ENCODE measurements at regions of chr6 and their contacts with region 1.

Region 1: GRCh38 chr6:26175428-26176181 is 88.4 kb downstream of the HFE start:
- DNase-seq: peak in 7 of 9 donors; percentile 57 to 75 (median 66)
- ATAC-seq: peak; percentile 32
- H3K4me3 ChIP-seq: no peak overlapping the region
- H3K4me3 Mint-ChIP-seq: peak overlapping the region in 7 of 10 donors; percentile 15 to 63 (median 43)
- H3K27ac ChIP-seq: no peak overlapping the region
- H3K27ac Mint-ChIP-seq: peak overlapping the region; percentile 32 to 89 (median 76)
- H3K4me1 ChIP-seq: peaks cover 16 to 19% of the 10 kb centered on the region in 2 donors
- H3K4me1 Mint-ChIP-seq: peaks cover 20 to 51% (median 39%) of the 10 kb centered on the region in 7 donors
- H3K27me3 ChIP-seq: no peaks in the 10 kb centered on the region
- H3K27me3 Mint-ChIP-seq: no peaks in the 10 kb centered on the region

Region 2: DNA sequence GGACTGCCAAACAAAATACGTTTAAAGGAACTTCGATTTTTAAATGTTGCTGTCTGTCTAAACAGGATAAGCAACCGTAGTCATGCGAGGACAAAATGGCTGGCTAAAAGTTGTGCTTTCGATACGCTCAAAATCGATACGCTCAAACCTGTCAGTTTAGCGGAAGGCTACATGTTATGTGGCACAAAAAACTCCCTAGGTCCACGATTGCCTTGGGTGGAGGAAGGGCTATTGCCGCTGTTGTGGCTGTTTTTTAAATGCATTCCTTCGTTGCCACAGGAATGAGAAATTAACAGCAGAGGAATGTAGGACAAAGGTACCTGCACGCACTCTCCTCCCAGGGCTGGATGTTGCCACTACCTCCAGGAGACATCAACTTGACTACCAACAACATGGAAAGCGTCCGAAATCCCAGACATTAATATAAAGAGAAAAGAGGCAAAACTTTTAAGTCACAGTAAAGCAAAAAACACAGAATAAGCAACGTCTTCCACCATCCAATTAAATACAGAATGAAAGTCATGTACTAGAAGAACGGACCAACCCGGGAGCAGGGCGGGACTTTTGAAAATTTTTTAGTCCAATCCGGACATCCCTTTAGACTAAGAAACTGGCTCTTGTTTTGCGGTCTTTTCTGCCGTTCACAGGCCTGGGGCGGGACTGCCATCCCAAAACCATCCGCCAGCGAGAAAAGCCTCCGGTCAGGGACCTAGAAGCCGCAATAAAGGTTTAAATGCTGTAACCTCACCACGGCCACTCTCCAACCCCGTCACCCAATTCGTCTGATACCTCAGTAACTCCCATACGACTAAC is 120.5 kb before region 1 on chr6:
- CTCF ChIA-PET with region 1: no interaction called
- POLR2A ChIA-PET with region 1: interaction called, 11 read pairs
- intact Hi-C with region 1: no loop called
- DNase-seq: peak; percentile 54 to 94 (median 90)
- ATAC-seq: peak; percentile 81
- H3K4me3 ChIP-seq: peak overlapping the region; percentile 93
- H3K4me3 Mint-ChIP-seq: peak overlapping the region; percentile 88 to 99 (median 95)
- H3K27ac ChIP-seq: peak overlapping the region; percentile 83
- H3K27ac Mint-ChIP-seq: peak overlapping the region; percentile 95 to 99 (median 98)
- H3K4me1 ChIP-seq: peaks cover 0 to 14% of the 10 kb centered on the region in 2 donors
- H3K4me1 Mint-ChIP-seq: peaks cover 9 to 52% (median 10%) of the 10 kb centered on the region in 7 donors
- H3K27me3 ChIP-seq: no peaks in the 10 kb centered on the region
- H3K27me3 Mint-ChIP-seq: peaks cover 0 to 10% (median 0%) of the 10 kb centered on the region in 5 donors

Region 3: GRCh38 chr6:26204332-26205165 is 28.9 kb after region 1 on chr6:
- CTCF ChIA-PET with region 1: interaction called, 5 read pairs
- POLR2A ChIA-PET with region 1: interaction called, 2,611 read pairs
- intact Hi-C with region 1: loop called in 1 of 2 experiments (anchors 1 kb)
- DNase-seq: peak; percentile 67 to 95 (median 89)
- ATAC-seq: peak; percentile 72
- H3K4me3 ChIP-seq: peak overlapping the region; percentile 77
- H3K4me3 Mint-ChIP-seq: no peak overlapping the region
- H3K27ac ChIP-seq: peak overlapping the region; percentile 90
- H3K27ac Mint-ChIP-seq: no peak overlapping the region
- H3K4me1 ChIP-seq: peaks cover 20 to 23% of the 10 kb centered on the region in 2 donors
- H3K4me1 Mint-ChIP-seq: peaks cover 9 to 36% (median 26%) of the 10 kb centered on the region in 7 donors
- H3K27me3 ChIP-seq: no peaks in the 10 kb centered on the region
- H3K27me3 Mint-ChIP-seq: peaks cover 0 to 5% (median 0%) of the 10 kb centered on the region in 5 donors

Region 4: GRCh38 chr6:26249957-26250697 is 74.5 kb after region 1 on chr6:
- CTCF ChIA-PET with region 1: no interaction called
- POLR2A ChIA-PET with region 1: interaction called, 6 read pairs
- intact Hi-C with region 1: loop called in 1 of 2 experiments (anchors 1 kb)
- DNase-seq: peak; percentile 53 to 85 (median 80)
- ATAC-seq: peak; percentile 85
- H3K4me3 ChIP-seq: peak overlapping the region; percentile 84
- H3K4me3 Mint-ChIP-seq: peak overlapping the region; percentile 88 to 100 (median 96)
- H3K27ac ChIP-seq: peak overlapping the region; percentile 71
- H3K27ac Mint-ChIP-seq: peak overlapping the region; percentile 85 to 97 (median 94)
- H3K4me1 ChIP-seq: peaks cover 4 to 19% of the 10 kb centered on the region in 2 donors
- H3K4me1 Mint-ChIP-seq: peaks cover 20 to 48% (median 39%) of the 10 kb centered on the region in 7 donors
- H3K27me3 ChIP-seq: no peaks in the 10 kb centered on the region
- H3K27me3 Mint-ChIP-seq: no peaks in the 10 kb centered on the region

Region 5: DNA sequence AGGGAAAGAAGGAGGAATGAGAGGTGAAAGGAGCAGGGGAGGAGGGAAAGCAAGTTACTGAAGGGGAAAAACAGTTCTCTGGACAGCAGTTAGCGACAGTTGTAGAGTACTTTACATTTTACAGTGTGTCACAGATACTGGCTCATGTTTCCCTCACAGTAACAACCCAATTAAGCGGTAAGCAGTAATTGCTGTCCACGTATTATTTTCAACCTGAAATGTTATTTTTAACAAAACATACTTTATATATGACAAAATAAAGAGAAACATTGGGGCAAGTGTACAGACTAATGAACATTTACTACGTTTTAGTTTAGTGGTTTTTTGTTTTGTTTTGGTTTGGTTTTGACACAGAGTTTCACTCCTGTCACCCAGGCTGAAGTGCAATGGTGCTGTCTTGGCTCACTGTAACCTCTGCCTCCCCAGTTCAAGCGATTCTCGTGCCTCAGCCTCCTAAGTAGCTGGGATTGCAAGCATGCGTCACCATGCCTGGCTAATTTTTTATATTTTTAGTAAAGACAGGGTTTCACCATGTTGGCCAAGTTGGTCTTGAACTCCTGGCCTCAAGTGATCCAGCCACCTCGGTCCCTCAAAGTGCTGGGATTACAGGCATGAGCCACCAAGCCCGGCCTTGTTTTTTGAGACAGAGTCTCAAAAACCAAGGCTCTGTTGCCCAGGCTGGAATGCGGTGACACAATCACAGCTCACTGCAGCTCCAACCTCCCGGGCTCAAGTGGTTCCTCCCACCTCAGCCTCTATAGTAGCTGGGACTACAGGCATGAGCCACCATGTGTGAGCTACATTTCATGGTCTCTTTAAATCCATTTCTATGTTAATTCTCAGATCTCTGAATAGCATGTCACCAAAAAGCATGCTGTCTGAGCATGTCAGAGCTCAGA is 166.8 kb after region 1 on chr6:
- CTCF ChIA-PET with region 1: interaction called, 4 read pairs
- POLR2A ChIA-PET with region 1: interaction called, 3 read pairs
- intact Hi-C with region 1: loop called in 1 of 2 experiments (anchors 2 kb)
- DNase-seq: no peak
- ATAC-seq: peak; percentile 4
- H3K4me3 ChIP-seq: peak overlapping the region; percentile 38
- H3K4me3 Mint-ChIP-seq: peak overlapping the region; percentile 55 to 91 (median 70)
- H3K27ac ChIP-seq: no peak overlapping the region
- H3K27ac Mint-ChIP-seq: peak overlapping the region in 2 of 9 donors; percentile 8 to 70
- H3K4me1 ChIP-seq: peaks cover 0 to 3% of the 10 kb centered on the region in 2 donors
- H3K4me1 Mint-ChIP-seq: peaks cover 0 to 22% (median 8%) of the 10 kb centered on the region in 7 donors
- H3K27me3 ChIP-seq: no peaks in the 10 kb centered on the region
- H3K27me3 Mint-ChIP-seq: peaks cover 0 to 18% (median 0%) of the 10 kb centered on the region in 5 donors

Region 6: GRCh38 chr6:26375270-26375669 is 199.7 kb after region 1 on chr6:
- CTCF ChIA-PET with region 1: no interaction called
- POLR2A ChIA-PET with region 1: no interaction called
- intact Hi-C with region 1: no loop called
- DNase-seq: peak in 1 of 9 donors; percentile 3
- ATAC-seq: no peak
- H3K4me3 ChIP-seq: no peak overlapping the region
- H3K4me3 Mint-ChIP-seq: peak overlapping the region in 2 of 10 donors; percentile 14 to 76
- H3K27ac ChIP-seq: peak overlapping the region; percentile 56
- H3K27ac Mint-ChIP-seq: peak overlapping the region in 8 of 9 donors; percentile 76 to 99 (median 88)
- H3K4me1 ChIP-seq: peaks cover 10 to 16% of the 10 kb centered on the region in 2 donors
- H3K4me1 Mint-ChIP-seq: peaks cover 28 to 82% (median 58%) of the 10 kb centered on the region in 7 donors
- H3K27me3 ChIP-seq: no peaks in the 10 kb centered on the region
- H3K27me3 Mint-ChIP-seq: no peaks in the 10 kb centered on the region

Region 7: DNA sequence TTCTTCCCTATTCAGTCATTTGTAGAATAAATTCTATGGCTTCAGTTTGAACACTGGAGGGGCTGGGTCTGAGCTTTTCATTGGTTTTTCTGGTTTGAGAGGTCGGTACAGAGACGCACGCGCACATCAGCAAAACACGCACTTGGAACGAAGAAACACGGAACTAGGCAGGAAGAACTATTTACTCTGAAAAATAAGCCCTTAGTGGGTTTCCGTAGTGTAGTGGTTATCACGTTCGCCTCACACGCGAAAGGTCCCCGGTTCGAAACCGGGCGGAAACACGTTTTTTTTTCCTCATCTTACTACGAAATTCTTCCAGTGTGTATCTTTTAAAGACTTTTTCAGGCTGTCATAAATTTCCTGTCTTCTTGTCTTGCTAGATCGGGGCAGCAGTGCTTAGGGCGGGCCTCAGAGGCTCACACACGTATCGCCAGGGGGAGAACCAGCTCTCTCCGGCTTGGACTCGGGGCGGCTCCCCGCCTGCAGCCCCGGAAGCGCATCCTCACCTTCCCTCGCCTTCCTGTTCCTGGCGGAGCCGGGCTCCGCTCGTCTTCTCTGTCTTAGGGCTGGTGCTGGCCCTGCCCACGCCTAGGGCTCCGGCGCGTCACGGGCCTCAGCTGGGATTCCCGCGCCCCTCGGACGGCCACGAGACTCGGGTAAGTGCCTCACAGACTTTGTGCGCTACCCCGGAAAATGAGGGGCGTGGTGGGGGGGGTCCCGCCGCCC is 362.4 kb after region 1 on chr6 and contains the start of gene HMGN4:
- CTCF ChIA-PET with region 1: interaction called, 7 read pairs
- POLR2A ChIA-PET with region 1: interaction called, 11 read pairs
- intact Hi-C with region 1: no loop called
- DNase-seq: peak; percentile 64 to 97 (median 95)
- ATAC-seq: peak; percentile 79
- H3K4me3 ChIP-seq: peak within 1 kb of the TSS; percentile 76
- H3K4me3 Mint-ChIP-seq: peak within 1 kb of the TSS; percentile 88 to 99 (median 94)
- H3K27ac ChIP-seq: peak within 1 kb of the TSS; percentile 88
- H3K27ac Mint-ChIP-seq: peak within 1 kb of the TSS; percentile 91 to 99 (median 98)
- H3K4me1 ChIP-seq: peaks cover 20 to 23% of the 10 kb centered on the region in 2 donors
- H3K4me1 Mint-ChIP-seq: peaks cover 46 to 72% (median 60%) of the 10 kb centered on the region in 7 donors
- H3K27me3 ChIP-seq: no peaks in the 10 kb centered on the region
- H3K27me3 Mint-ChIP-seq: peaks cover 0 to 5% (median 0%) of the 10 kb centered on the region in 5 donors
- total RNA-seq, gene HMGN4: 37.6 to 96.0 (median 81.7) TPM